ENCODE measurements at regions of chr3 and their contacts with region 1.

Region 1: DNA sequence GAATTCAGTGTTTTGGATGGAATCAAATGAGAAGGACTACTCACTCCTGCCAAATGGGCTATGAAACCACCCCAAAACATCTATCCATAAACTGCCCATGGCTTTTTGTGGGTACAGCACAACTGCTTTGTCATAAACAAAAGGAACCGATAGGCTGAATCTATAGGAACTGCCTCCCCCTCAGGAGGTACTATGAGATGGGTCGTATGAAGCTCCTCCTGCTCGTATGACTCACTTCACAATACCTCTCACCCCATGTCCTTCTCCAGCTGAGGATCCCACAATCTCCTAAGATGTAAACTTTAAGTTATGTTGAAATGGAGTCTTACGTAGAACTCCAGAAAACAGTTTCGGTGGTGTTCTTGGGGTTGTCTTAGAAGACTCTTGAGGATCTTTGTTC is 129.9 kb upstream of the SAMMSON start:
- DNase-seq: no peak
- ATAC-seq: no peak
- H3K4me3 ChIP-seq: no peak overlapping the region
- H3K27ac ChIP-seq: peak overlapping the region in 3 of 4 donors; percentile 15 to 38 (median 31)
- H3K4me1 ChIP-seq: peaks cover 62 to 63% of the 10 kb centered on the region in 2 donors
- H3K27me3 ChIP-seq: no peaks in the 10 kb centered on the region
- CTCF ChIP-seq: no peak
- POLR2A ChIP-seq: no peak

Region 2: DNA sequence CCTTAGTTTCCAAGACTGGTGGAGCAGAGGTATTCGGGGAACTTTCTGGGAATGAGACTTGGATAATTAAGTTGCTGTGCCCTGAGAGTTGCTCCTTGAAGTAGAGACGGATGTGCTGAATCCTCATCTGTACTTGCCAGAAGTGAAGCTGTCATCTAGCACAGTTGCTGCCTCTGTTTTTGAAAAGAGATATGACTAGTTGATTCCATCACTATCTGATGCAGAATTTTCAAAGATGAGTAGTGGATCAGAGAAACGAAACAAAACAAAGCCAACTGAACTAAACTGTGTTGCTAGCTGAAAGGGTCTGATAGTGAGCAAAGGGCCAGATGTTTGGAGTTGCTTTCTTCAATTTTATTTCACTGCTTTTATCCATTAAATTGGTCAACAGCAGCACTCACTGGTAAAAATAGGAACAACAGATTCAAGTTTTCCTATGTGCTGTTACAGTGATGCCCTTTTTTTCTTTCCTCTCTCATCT is 77.7 kb before region 1 on chr3:
- in situ Hi-C with region 1: no loop called
- intact Hi-C with region 1: loop called (anchors 5 kb)
- DNase-seq: no peak
- ATAC-seq: peak; percentile 53 to 57
- H3K4me3 ChIP-seq: peak overlapping the region in 1 of 4 donors; percentile 22
- H3K27ac ChIP-seq: peak overlapping the region; percentile 58 to 73 (median 64)
- H3K4me1 ChIP-seq: peaks cover 45 to 59% of the 10 kb centered on the region in 2 donors
- H3K27me3 ChIP-seq: no peaks in the 10 kb centered on the region
- CTCF ChIP-seq: peak in 4 of 5 experiments; percentile 26 to 50 (median 42)
- POLR2A ChIP-seq: no peak

Region 3: DNA sequence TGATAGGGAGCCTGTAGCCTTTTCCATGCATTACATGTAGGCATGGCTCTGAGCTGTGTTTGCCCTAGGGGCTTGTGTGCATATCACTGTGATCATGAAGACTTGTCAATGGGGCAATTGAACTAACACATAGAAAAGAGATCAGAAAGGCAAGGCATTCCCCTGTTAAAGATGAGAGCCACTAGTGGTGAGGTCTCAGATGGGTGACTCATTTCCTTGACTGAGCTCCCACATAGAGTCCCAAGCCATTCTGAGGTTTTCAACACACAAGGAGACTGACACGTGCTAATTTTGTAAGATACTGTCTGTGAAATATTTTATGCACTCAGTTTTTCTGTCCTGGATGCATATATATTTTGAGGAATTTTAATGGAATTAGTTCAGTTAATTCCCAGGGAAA is 183.7 kb after region 1 on chr3:
- in situ Hi-C with region 1: no loop called
- intact Hi-C with region 1: no loop called
- DNase-seq: no peak
- ATAC-seq: no peak
- H3K4me3 ChIP-seq: no peak overlapping the region
- H3K27ac ChIP-seq: no peak overlapping the region
- H3K4me1 ChIP-seq: no peaks in the 10 kb centered on the region
- H3K27me3 ChIP-seq: no peaks in the 10 kb centered on the region
- CTCF ChIP-seq: no peak
- POLR2A ChIP-seq: no peak